GM12878 (cell line): ENCODE measurements at regions of chr1 and their contacts with region 1.

Region 1: GRCh38 chr1:199163670-199164069 is 524.8 kb downstream of the PTPRC start:
- DNase-seq: no peak
- ATAC-seq: peak; percentile 67
- H3K4me3 ChIP-seq: no peak overlapping the region
- H3K27ac ChIP-seq: no peak overlapping the region
- H3K4me1 ChIP-seq: peaks cover 9% of the 10 kb centered on the region; the same call in 1 of the 2 replicates
- H3K27me3 ChIP-seq: no peaks in the 10 kb centered on the region
- CTCF ChIP-seq: no peak
- EP300 ChIP-seq: no peak
- POLR2A ChIP-seq: no peak
- RAD21 ChIP-seq: no peak

Region 2: DNA sequence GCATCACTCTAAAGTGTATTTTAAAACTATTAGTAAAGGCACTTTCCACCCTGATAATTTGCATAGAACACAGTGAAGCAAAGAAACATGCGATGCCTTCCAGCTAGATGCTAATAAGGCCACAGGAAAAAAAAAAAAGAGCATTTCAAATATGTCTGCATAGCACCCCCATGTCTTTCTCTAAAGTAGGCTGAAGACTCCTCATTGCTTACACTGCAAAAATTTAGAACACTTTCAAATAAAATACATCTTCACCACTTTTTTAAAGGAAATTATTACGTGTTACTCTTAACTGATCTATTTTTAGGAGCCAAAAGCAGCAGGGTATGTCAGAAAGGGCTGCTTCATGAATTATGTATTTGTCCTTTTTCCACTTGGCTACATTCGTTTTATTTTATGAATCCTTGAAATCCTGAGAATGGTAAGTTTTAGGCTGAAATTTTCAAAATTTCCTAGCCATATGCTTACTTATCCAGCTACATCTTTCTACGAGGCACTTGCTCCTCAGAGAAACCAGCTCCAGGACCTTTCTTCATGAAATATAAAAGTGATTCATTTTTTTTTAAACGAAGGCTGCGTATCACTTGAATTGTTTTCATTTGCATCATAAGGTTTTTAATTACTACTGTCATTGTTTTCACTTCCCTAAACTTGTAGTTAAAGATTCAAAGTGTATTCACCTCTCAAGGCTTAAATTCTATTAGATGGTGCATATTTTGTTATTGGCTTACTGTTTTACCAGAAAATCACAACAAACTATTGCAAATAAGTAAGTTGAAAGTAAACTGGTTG is 11.8 kb before region 1 on chr1:
- CTCF ChIA-PET with region 1: interaction called, 5 read pairs
- POLR2A ChIA-PET with region 1: interaction called, 5 read pairs
- RAD21 ChIA-PET with region 1: interaction called, 7 read pairs
- SMC1A ChIA-PET with region 1: interaction called, 28 read pairs
- in situ Hi-C with region 1: no loop called
- intact Hi-C with region 1: no loop called
- DNase-seq: no peak
- ATAC-seq: peak; percentile 85
- H3K4me3 ChIP-seq: no peak overlapping the region; the same call in 1 of the 2 replicates
- H3K27ac ChIP-seq: peak overlapping the region; percentile 13; the same call in 1 of the 2 replicates
- H3K4me1 ChIP-seq: peaks cover 12% of the 10 kb centered on the region; the same call in 1 of the 2 replicates
- H3K27me3 ChIP-seq: no peaks in the 10 kb centered on the region
- CTCF ChIP-seq: no peak
- EP300 ChIP-seq: peak; percentile 78 to 82; a peak in 3 of 4 replicates
- POLR2A ChIP-seq: no peak
- RAD21 ChIP-seq: no peak

Region 3: GRCh38 chr1:199226163-199226562 is 62.5 kb after region 1 on chr1:
- CTCF ChIA-PET with region 1: no interaction called
- POLR2A ChIA-PET with region 1: no interaction called
- RAD21 ChIA-PET with region 1: no interaction called
- SMC1A ChIA-PET with region 1: interaction called, 13 read pairs
- in situ Hi-C with region 1: no loop called
- intact Hi-C with region 1: no loop called
- DNase-seq: peak; percentile 16
- ATAC-seq: peak; percentile 94
- H3K4me3 ChIP-seq: no peak overlapping the region
- H3K27ac ChIP-seq: peak overlapping the region; percentile 52; the same call in 1 of the 2 replicates
- H3K4me1 ChIP-seq: peaks cover 3% of the 10 kb centered on the region; the same call in 1 of the 2 replicates
- H3K27me3 ChIP-seq: no peaks in the 10 kb centered on the region
- CTCF ChIP-seq: no peak
- EP300 ChIP-seq: peak in 1 of 2 experiments; percentile 15; a peak in 1 of 4 replicates
- POLR2A ChIP-seq: no peak
- RAD21 ChIP-seq: no peak

Region 4: GRCh38 chr1:199422198-199422597 is 258.5 kb after region 1 on chr1:
- CTCF ChIA-PET with region 1: no interaction called
- POLR2A ChIA-PET with region 1: no interaction called
- RAD21 ChIA-PET with region 1: no interaction called
- SMC1A ChIA-PET with region 1: no interaction called
- in situ Hi-C with region 1: no loop called
- intact Hi-C with region 1: no loop called
- DNase-seq: no peak
- ATAC-seq: peak; percentile 26; the same call in 1 of the 3 replicates
- H3K4me3 ChIP-seq: no peak overlapping the region
- H3K27ac ChIP-seq: no peak overlapping the region
- H3K4me1 ChIP-seq: no peaks in the 10 kb centered on the region
- H3K27me3 ChIP-seq: no peaks in the 10 kb centered on the region
- CTCF ChIP-seq: peak; percentile 15 to 23 (median 19); a peak in 2 of 6 replicates
- EP300 ChIP-seq: no peak
- POLR2A ChIP-seq: no peak
- RAD21 ChIP-seq: peak; percentile 31; the same call in 1 of the 2 replicates